Activated T-helper 2 cell treated with anti-CD3 and anti-CD28 coated beads, Interferon-gamma antibody, Interleukin-2, Interleukin-4, amounts not matched to agents 10 μg/mL and 5 μg/mL and 100 μg/mL, durations not matched to agents 14 hours and 24 hours and 36 hours (primary cell): ENCODE measurements at regions of chr2 and their contacts with region 1.

Region 1: GRCh38 chr2:8681786-8682692 is at the start of gene ID2:
- DNase-seq: peak; percentile 99
- H3K4me3 Mint-ChIP-seq: peak within 1 kb of the TSS; percentile 100
- H3K27ac Mint-ChIP-seq: peak within 1 kb of the TSS; percentile 98
- H3K4me1 Mint-ChIP-seq: peaks cover 28% of the 10 kb centered on the region
- H3K27me3 Mint-ChIP-seq: peaks cover 10% of the 10 kb centered on the region
- total RNA-seq, gene ID2: 423 and 431 TPM in 2 replicates

Region 2: GRCh38 chr2:7450188-7450832 is 1231.7 kb before region 1 on chr2:
- intact Hi-C with region 1: loop called (anchors 5 kb)
- DNase-seq: peak; percentile 59
- H3K4me3 Mint-ChIP-seq: peak overlapping the region; percentile 26
- H3K27ac Mint-ChIP-seq: peak overlapping the region; percentile 99
- H3K4me1 Mint-ChIP-seq: peaks cover 85% of the 10 kb centered on the region
- H3K27me3 Mint-ChIP-seq: no peaks in the 10 kb centered on the region

Region 3: DNA sequence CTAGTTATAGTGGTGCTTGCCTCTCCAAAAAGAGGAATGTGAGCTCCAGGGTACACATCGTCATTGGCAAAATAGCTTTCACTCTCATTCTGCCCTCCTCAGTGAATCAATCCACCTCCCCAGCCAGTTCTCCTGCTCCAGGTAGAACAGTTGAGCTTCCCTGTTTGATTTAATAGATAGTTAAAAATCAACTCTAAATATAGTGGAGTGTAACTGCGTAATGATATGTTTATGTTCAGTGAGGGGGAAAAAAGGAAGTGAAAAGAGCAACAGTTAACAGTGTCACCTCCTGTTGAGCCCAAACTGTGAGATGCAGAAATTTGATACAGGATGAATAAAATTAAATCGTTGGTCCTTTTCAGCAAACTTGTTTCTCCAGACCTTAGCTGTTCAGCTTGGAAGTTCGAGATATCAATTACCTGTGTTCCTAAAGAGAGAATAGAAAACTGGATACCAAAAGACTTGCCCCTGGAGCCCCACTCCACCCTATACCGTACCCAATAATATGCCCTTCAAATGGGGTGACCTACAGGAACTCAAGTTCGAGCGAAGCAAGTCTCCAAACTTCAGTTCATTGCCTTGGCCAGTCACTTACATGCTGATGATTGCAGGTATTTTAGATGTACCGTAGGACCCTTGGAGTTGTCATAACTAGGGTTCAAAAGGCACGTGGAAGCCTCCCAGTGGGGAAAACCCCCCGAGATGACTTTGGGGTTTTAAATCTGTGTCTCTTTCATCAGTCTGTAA is 1056.5 kb before region 1 on chr2:
- intact Hi-C with region 1: no loop called
- DNase-seq: no peak
- H3K4me3 Mint-ChIP-seq: no peak overlapping the region
- H3K27ac Mint-ChIP-seq: no peak overlapping the region
- H3K4me1 Mint-ChIP-seq: peaks cover 25% of the 10 kb centered on the region
- H3K27me3 Mint-ChIP-seq: no peaks in the 10 kb centered on the region

Region 4: GRCh38 chr2:7773362-7774360 is 908.4 kb before region 1 on chr2:
- intact Hi-C with region 1: loop called (anchors 2 kb)
- DNase-seq: peak; percentile 26
- H3K4me3 Mint-ChIP-seq: peak overlapping the region; percentile 31
- H3K27ac Mint-ChIP-seq: peak overlapping the region; percentile 91
- H3K4me1 Mint-ChIP-seq: peaks cover 58% of the 10 kb centered on the region
- H3K27me3 Mint-ChIP-seq: no peaks in the 10 kb centered on the region

Region 5: DNA sequence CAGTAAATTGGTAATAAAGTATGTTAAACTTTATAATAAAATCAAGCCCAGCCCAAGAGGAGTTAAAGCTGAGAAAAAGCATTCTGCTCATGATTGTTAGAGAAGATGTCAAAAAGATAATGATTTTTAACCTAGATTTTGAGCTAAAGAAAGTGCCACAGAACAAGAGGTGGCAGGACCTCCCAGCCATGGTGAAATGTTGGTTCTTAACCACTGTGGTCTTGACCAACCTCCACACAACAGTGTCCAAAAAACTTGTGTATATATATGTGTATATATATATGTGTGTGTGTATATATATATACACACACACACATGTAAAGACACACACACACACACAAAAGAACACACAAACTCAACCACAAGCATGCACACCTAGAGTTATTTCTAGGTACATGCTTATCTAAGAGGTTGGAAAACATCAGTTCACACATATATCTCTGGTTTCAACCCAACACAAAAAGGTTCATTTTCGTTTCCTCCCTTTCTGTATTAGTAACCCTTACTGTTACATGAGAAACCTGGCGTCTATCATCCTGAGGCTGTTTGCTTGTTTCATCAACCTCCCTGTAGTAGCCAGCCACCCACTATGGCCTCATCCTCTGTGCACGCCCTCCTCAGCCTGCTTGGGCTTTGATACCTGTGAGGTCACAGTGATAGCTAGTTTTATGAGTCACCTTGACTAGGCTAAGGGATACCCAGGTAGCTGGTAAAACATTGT is 632.0 kb before region 1 on chr2:
- intact Hi-C with region 1: loop called (anchors 1 kb)
- DNase-seq: peak; percentile 63
- H3K4me3 Mint-ChIP-seq: peak overlapping the region; percentile 30
- H3K27ac Mint-ChIP-seq: peak overlapping the region; percentile 86
- H3K4me1 Mint-ChIP-seq: peaks cover 53% of the 10 kb centered on the region
- H3K27me3 Mint-ChIP-seq: no peaks in the 10 kb centered on the region

Region 6: GRCh38 chr2:8408560-8409460 is 273.2 kb before region 1 on chr2:
- intact Hi-C with region 1: loop called (anchors 1 kb)
- DNase-seq: peak; percentile 43
- H3K4me3 Mint-ChIP-seq: no peak overlapping the region
- H3K27ac Mint-ChIP-seq: peak overlapping the region; percentile 79
- H3K4me1 Mint-ChIP-seq: peaks cover 36% of the 10 kb centered on the region
- H3K27me3 Mint-ChIP-seq: peaks cover 24% of the 10 kb centered on the region

Region 7: DNA sequence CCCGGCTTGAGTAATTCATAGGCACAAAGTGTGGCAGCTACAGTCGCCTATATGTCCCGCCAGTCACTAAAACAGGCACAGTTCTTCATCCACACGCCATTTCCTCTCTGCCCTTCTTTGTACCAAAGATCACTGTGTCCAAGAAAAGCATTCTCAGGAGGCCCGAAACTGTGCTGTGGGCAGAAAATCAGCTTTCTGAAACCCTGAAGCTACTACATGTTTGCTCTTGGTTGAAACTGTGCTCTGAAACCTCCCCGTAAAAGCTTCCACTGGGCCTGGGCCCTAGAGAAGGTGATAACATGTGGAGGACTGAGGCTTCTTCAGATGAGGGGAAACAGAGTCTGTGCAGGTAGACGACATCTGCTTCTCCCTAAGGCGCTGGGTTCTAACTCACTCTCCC is 75.8 kb before region 1 on chr2:
- intact Hi-C with region 1: loop called (anchors 1 kb)
- DNase-seq: no peak
- H3K4me3 Mint-ChIP-seq: no peak overlapping the region
- H3K27ac Mint-ChIP-seq: peak overlapping the region; percentile 53
- H3K4me1 Mint-ChIP-seq: peaks cover 55% of the 10 kb centered on the region
- H3K27me3 Mint-ChIP-seq: peaks cover 7% of the 10 kb centered on the region

Region 8: DNA sequence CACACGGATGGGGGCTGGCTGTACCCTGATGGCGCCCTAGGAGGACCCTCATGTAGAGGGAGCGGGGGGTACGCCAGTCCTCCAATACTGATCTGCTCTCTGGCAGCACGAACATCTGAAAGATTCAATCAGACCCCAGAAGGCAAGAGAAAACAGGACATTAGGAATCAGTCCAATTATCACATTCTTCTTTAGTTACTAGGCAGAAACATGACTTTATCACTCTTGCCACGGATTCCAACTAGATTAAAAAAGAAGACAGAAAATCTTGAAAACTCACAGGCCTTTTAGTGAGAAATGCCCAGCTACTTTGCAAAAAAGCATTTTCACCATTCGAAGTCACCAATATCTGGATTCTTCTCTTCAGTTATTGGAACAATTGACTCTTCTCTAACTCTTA is 68.2 kb after region 1 on chr2:
- intact Hi-C with region 1: no loop called
- DNase-seq: no peak
- H3K4me3 Mint-ChIP-seq: no peak overlapping the region
- H3K27ac Mint-ChIP-seq: no peak overlapping the region
- H3K4me1 Mint-ChIP-seq: no peaks in the 10 kb centered on the region
- H3K27me3 Mint-ChIP-seq: no peaks in the 10 kb centered on the region